Activated CD4-positive, alpha-beta T cell treated with anti-CD3 and anti-CD28 coated beads for 36 hours (primary cell): ENCODE measurements at regions of chr2 and their contacts with region 1.

Region 1: DNA sequence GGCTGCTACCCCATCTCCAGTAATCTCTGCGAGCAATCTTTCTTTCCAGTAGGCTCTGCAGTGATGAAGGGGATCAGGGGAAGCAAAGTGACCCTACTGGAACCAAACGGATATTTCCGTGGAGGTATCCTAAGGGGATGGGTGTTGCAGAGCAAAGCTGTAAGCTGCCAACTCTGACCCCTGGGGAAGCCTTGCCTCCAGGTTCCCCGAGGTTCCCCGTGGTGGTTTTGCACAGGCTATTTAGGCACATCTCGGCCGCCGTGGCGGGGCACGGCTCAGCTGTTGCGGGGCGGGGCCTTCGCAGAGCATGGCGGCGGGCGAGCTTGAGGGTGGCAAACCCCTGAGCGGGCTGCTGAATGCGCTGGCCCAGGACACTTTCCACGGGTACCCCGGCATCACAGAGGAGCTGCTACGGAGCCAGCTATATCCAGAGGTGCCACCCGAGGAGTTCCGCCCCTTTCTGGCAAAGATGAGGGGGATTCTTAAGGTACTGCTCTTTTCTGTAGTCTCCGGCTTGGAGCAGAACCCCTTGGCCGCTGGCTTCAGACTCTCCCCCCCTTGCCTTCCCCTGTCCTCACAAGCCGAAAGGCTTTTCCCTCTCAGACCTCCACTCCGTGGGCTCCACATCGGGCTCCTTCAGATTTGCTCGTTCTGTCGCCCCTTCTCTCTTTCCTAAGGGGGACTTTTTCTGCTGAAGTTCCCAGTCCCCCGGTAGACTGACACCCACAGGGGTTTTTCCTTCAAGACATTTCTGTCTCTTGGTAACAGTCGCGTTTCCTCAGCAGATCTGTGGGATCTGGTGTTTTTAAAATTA is at the start of gene COMMD1:
- DNase-seq: peak; percentile 93
- ATAC-seq: peak; percentile 99
- H3K4me3 Mint-ChIP-seq: peak within 1 kb of the TSS; percentile 96
- H3K27ac Mint-ChIP-seq: peak within 1 kb of the TSS; percentile 80
- H3K4me1 Mint-ChIP-seq: peaks cover 9% of the 10 kb centered on the region
- H3K27me3 Mint-ChIP-seq: no peaks in the 10 kb centered on the region
- total RNA-seq, gene COMMD1: 29.3 to 36.1 TPM

Region 2: GRCh38 chr2:61854474-61855182 is 51.0 kb before region 1 on chr2:
- CTCF ChIA-PET with region 1: no interaction called
- POLR2A ChIA-PET with region 1: no interaction called
- intact Hi-C with region 1: loop called in 1 of 2 experiments (anchors 1 kb)
- DNase-seq: peak; percentile 93
- ATAC-seq: peak; percentile 94
- H3K4me3 Mint-ChIP-seq: peak overlapping the region; percentile 99
- H3K27ac Mint-ChIP-seq: peak overlapping the region; percentile 94
- H3K4me1 Mint-ChIP-seq: peaks cover 20% of the 10 kb centered on the region
- H3K27me3 Mint-ChIP-seq: no peaks in the 10 kb centered on the region